AG04449 (cell line): ENCODE measurements at regions of chr5 and their contacts with region 1.

Region 1: GRCh38 chr5:43066799-43067741 is 27.0 kb upstream of the ANXA2R start:
- DNase-seq: no peak
- H3K4me3 ChIP-seq: peak overlapping the region; percentile 86
- CTCF ChIP-seq: no peak

Region 2: GRCh38 chr5:42889311-42889933 is 177.6 kb before region 1 on chr5:
- CTCF ChIA-PET with region 1: no interaction called
- POLR2A ChIA-PET with region 1: no interaction called
- DNase-seq: no peak
- H3K4me3 ChIP-seq: no peak overlapping the region
- CTCF ChIP-seq: peak; percentile 84

Region 3: DNA sequence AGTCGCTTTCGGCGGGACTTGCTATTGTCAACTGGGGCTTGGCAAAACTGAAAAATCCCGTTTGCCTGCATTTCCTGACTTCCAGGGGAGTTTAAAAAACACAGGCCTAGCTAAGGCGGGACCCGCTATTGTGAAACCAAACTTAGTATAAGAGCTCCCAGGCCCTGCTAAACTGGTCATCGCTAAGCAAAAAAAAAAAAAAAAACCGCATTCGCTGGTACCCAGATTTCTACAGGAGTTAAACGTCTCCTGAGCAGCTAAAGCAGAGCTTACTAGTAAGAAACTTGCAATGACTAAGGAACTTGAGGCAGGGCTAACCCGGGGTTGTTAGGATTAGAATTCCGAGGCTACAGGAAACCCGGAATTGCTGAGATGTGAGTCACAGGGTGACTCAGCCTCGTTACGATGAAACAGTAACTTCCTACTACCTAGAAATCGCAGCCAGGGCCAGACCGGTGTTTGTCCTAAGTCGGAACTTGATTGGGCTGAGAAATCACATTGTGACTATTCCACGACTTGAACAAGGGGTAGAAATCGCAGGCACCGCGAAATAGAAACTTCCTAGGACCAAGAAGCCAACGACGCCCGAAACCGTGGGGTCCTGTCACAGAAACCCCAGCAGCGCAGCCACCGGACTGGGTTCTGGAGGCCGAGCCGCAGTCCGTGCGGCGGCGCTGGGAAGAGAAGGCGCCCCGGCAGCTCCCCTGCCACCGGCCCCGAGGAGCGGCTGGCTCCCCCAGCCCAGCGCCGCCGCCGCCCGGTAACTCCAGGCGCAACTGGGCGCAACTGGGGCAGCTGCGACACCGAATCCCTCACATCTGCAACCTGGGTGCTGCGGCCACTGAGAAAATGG is 116.4 kb before region 1 on chr5:
- CTCF ChIA-PET with region 1: interaction called, 5 read pairs
- POLR2A ChIA-PET with region 1: interaction called, 13 read pairs
- DNase-seq: peak; percentile 99
- H3K4me3 ChIP-seq: peak overlapping the region; percentile 64
- CTCF ChIP-seq: no peak

Region 4: GRCh38 chr5:43049236-43049635 is 17.8 kb before region 1 on chr5:
- CTCF ChIA-PET with region 1: interaction called, 22 read pairs
- POLR2A ChIA-PET with region 1: no interaction called
- DNase-seq: no peak
- H3K4me3 ChIP-seq: no peak overlapping the region
- CTCF ChIP-seq: no peak